ENCODE measurements at regions of chr2 and their contacts with region 1.

Region 1: GRCh38 chr2:1817256-1818051 is 73.1 kb upstream of the PXDN start:
- DNase-seq: peak; percentile 98
- ATAC-seq: peak; percentile 94
- H3K4me3 ChIP-seq: no peak overlapping the region
- H3K27ac ChIP-seq: peak overlapping the region; percentile 76
- H3K4me1 ChIP-seq: peaks cover 14% of the 10 kb centered on the region
- H3K27me3 ChIP-seq: no peaks in the 10 kb centered on the region
- CTCF ChIP-seq: peak; percentile 98
- POLR2A ChIP-seq: no peak; the same call in 1 of the 2 replicates
- RAD21 ChIP-seq: peak; percentile 97

Region 2: DNA sequence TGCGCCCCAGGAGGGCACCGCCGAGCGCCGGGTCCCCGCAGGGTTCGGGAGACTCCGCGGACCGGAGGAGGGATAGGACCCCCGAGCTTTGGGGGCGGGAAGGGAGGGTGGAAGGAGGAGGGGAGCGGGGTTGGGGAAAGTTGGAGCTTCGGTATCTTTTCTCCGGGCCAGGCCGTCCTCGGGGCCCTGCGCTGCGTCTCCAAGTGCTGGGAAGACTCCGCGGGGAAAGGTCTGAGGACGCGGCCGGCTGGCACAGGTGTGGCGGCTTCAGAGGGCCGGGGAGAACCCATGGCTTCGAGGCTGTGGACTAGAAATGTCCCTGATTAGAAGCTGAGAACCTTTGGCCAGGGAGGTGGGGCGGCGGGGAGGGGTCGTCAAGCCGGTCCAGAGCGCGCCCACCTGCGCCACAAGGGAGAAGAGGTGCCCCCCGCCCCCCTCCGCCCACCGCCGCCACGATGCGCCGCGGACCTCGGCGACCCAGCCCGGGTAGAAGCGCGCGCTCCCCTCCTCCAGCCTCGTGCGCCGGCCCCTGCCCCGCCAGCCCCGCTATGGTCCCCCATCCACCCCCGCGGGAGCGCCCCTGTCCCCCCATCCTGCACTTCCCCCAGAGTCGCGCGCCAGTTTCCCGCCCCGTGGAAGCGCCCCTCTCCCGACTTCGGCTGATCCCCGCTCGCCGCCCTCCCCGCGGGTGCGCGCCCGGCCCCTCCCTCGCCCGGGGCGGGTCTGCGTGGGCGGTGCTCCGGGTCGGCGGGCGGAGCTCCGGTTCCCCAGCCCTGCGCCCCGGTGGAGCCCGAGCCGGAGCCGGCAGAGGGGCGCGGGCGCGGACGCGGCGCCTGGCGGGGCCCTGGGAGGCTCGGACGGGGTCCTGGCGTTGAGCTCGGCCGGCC is 867.1 kb before region 1 on chr2 and contains the start of gene SNTG2:
- CTCF ChIA-PET with region 1: no interaction called
- POLR2A ChIA-PET with region 1: no interaction called
- dilution Hi-C with region 1: no loop called
- in situ Hi-C with region 1: no loop called
- intact Hi-C with region 1: loop called (anchors 2 kb)
- DNase-seq: no peak
- ATAC-seq: peak; percentile 87
- H3K4me3 ChIP-seq: peak within 1 kb of the TSS; percentile 46
- H3K27ac ChIP-seq: no peak within 1 kb of the TSS
- H3K4me1 ChIP-seq: no peaks in the 10 kb centered on the region
- H3K27me3 ChIP-seq: peaks cover 28% of the 10 kb centered on the region
- CTCF ChIP-seq: no peak
- POLR2A ChIP-seq: no peak
- RAD21 ChIP-seq: no peak
- total RNA-seq, gene SNTG2: under 0.01 and 0.56 TPM in 2 replicates

Region 3: GRCh38 chr2:1653956-1654695 is 163.3 kb before region 1 on chr2:
- CTCF ChIA-PET with region 1: no interaction called
- POLR2A ChIA-PET with region 1: no interaction called
- dilution Hi-C with region 1: no loop called
- in situ Hi-C with region 1: no loop called
- intact Hi-C with region 1: loop called (anchors 1 kb)
- DNase-seq: peak; percentile 87
- ATAC-seq: no peak
- H3K4me3 ChIP-seq: no peak overlapping the region
- H3K27ac ChIP-seq: peak overlapping the region; percentile 91
- H3K4me1 ChIP-seq: peaks cover 34% of the 10 kb centered on the region
- H3K27me3 ChIP-seq: no peaks in the 10 kb centered on the region
- CTCF ChIP-seq: no peak
- POLR2A ChIP-seq: 0 out of 2 replicates have a peak, but pooled peaks have one; percentile 8
- RAD21 ChIP-seq: no peak

Region 4: DNA sequence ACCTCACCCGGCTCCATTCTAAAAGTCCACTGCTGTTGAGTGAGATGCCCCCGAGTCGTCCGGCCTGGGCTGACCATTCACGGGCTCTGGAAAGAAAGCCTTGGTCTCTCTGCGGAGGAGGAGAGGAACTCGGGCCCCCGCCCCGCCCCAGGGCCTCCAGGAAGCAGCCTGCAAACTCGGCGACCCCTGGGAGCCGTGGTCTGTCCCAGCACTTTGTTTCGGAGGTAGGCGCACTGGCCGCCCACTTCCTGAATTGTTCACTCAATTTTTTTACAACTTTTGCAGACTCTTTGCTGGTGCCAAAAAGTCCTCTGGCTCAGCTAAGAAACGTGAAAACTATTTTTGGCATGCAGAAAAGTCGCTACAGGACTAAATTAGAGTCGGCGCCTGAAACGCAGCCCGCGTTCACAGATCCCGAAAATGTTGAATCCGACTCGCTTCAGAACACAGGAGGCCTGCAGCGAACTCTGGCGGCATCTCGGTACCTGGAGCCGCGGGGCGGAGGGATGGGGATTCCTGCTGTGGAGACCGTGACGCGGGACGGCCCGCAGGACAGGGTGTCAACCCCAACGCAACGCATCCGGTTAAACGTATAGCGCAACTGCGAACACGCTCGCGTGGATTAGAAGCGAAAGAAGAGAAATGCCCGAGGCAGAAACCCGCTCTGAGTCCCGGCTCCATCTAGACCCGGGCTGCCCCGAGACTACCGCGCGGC is 74.6 kb before region 1 on chr2:
- CTCF ChIA-PET with region 1: interaction called, 5 read pairs
- POLR2A ChIA-PET with region 1: interaction called, 3 read pairs
- dilution Hi-C with region 1: no loop called
- in situ Hi-C with region 1: no loop called
- intact Hi-C with region 1: loop called (anchors 1 kb)
- DNase-seq: peak; percentile 90
- ATAC-seq: peak; percentile 55
- H3K4me3 ChIP-seq: peak overlapping the region; percentile 52
- H3K27ac ChIP-seq: peak overlapping the region; percentile 80
- H3K4me1 ChIP-seq: peaks cover 37% of the 10 kb centered on the region
- H3K27me3 ChIP-seq: no peaks in the 10 kb centered on the region
- CTCF ChIP-seq: peak; percentile 68
- POLR2A ChIP-seq: peak; percentile 55; the same call in 1 of the 2 replicates
- RAD21 ChIP-seq: peak; percentile 76

Region 5: GRCh38 chr2:1791685-1792435 is 25.6 kb before region 1 on chr2:
- CTCF ChIA-PET with region 1: interaction called, 4 read pairs
- POLR2A ChIA-PET with region 1: no interaction called
- dilution Hi-C with region 1: no loop called
- in situ Hi-C with region 1: no loop called
- intact Hi-C with region 1: loop called (anchors 2 kb)
- DNase-seq: peak; percentile 89
- ATAC-seq: peak; percentile 83
- H3K4me3 ChIP-seq: no peak overlapping the region
- H3K27ac ChIP-seq: peak overlapping the region; percentile 61; the same call in 1 of the 2 replicates
- H3K4me1 ChIP-seq: peaks cover 7% of the 10 kb centered on the region
- H3K27me3 ChIP-seq: no peaks in the 10 kb centered on the region
- CTCF ChIP-seq: 0 out of 2 replicates have a peak, but pooled peaks have one; percentile 3
- POLR2A ChIP-seq: no peak
- RAD21 ChIP-seq: no peak

Region 6: DNA sequence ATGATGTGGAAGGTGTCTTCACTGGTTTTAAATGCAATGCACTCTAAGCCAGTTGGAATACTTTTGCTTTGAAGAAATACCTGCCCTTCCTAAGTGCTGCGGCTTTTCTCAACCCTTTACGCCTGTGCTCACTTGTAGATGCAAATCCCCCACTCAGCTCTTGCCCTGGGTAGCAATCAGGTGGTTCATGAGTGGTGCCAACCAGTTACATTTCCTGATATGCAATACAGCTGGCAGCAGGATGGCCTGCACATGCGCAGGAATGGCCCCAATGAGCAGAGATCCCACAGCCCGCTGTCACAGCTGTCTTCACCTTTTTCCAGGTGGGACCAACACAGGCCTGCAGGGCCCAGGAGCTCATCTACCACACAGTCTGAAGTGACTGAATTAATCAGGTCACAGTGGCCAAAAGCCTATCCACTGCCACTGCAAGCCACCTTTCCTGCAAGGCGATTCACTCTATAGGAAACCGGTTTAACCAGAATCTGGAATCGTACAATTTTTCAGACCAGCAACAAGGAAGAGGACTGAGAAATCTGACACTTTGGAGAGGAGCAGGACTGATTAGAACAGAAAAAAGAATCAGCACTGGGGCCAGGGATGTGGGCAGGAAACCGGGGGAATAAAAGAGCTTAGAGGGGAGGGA is 265.8 kb after region 1 on chr2:
- CTCF ChIA-PET with region 1: no interaction called
- POLR2A ChIA-PET with region 1: no interaction called
- dilution Hi-C with region 1: no loop called
- in situ Hi-C with region 1: no loop called
- intact Hi-C with region 1: no loop called
- DNase-seq: no peak
- ATAC-seq: no peak
- H3K4me3 ChIP-seq: no peak overlapping the region
- H3K27ac ChIP-seq: no peak overlapping the region
- H3K4me1 ChIP-seq: no peaks in the 10 kb centered on the region
- H3K27me3 ChIP-seq: no peaks in the 10 kb centered on the region
- CTCF ChIP-seq: no peak
- POLR2A ChIP-seq: no peak
- RAD21 ChIP-seq: no peak